MCF 10A (cell line): ENCODE measurements at regions of chr21 and their contacts with region 1.

Region 1: GRCh38 chr21:41133896-41134522 is 34.0 kb upstream of the BACE2 start:
- DNase-seq: peak; percentile 56
- H3K4me3 Mint-ChIP-seq: no peak overlapping the region
- H3K27ac Mint-ChIP-seq: no peak overlapping the region
- H3K4me1 Mint-ChIP-seq: no peaks in the 10 kb centered on the region
- H3K27me3 Mint-ChIP-seq: peaks cover 13% of the 10 kb centered on the region
- CTCF ChIP-seq: peak; percentile 63

Region 2: DNA sequence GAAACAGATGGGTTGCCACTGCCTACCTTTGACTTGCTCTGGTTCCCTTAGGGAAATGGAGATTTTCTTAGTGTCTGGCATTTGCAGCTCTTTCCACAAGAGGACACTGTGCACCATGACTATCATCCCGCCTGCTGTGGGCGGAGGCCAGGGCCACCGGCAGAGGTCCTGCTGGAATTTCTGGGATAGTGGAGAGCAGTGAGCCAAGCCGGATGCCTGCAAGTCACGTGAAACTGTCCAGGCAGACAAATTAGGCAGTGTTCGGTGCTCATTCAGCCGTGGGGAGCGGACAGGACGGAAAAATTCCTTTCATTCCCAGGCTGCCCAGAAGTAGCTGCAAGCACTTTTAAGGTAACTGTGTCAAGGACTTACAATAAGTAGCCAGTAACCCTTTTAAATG is 1345.6 kb before region 1 on chr21:
- CTCF ChIA-PET with region 1: no interaction called
- POLR2A ChIA-PET with region 1: no interaction called
- intact Hi-C with region 1: loop called (anchors 10 kb)
- DNase-seq: peak; percentile 40
- H3K4me3 Mint-ChIP-seq: peak overlapping the region; percentile 41
- H3K27ac Mint-ChIP-seq: no peak overlapping the region
- H3K4me1 Mint-ChIP-seq: no peaks in the 10 kb centered on the region
- H3K27me3 Mint-ChIP-seq: no peaks in the 10 kb centered on the region
- CTCF ChIP-seq: peak; percentile 81

Region 3: DNA sequence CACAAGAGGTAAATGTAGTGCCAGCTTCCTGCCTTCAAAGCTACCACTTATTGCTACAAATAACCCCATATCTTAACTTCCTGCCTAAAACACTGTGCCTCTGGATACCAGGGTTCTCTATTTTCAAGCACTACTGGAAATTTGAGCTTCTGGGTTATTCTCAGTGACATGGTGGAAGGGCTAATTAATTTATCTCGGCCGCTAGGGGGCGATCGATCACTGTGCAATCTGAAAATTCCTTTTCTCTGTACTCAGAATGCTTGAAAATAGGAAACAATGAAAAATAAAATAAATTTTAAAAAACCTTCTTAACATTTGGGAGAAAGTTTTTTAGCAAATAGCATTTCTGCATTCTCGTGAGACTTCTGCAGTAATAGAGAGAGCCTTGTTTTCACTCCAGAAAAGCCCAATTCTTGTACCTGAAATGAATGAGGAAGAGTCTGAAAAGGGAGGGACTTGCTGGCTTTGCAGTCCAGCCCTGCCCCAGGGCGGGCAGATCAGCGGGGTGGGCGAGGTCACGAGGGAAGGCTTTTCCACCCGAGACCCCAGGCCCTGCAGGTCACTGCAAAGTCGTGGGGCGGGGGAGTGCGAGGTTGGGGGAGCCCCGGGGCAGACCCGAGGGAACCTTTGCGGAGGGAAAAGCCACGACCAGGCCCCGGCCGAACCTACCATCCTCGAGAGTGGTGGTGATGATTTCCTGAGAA is 990.0 kb before region 1 on chr21:
- CTCF ChIA-PET with region 1: interaction called, 15 read pairs
- POLR2A ChIA-PET with region 1: no interaction called
- intact Hi-C with region 1: loop called (anchors 2 kb)
- DNase-seq: peak; percentile 40
- H3K4me3 Mint-ChIP-seq: no peak overlapping the region
- H3K27ac Mint-ChIP-seq: no peak overlapping the region
- H3K4me1 Mint-ChIP-seq: no peaks in the 10 kb centered on the region
- H3K27me3 Mint-ChIP-seq: no peaks in the 10 kb centered on the region
- CTCF ChIP-seq: peak; percentile 60

Region 4: DNA sequence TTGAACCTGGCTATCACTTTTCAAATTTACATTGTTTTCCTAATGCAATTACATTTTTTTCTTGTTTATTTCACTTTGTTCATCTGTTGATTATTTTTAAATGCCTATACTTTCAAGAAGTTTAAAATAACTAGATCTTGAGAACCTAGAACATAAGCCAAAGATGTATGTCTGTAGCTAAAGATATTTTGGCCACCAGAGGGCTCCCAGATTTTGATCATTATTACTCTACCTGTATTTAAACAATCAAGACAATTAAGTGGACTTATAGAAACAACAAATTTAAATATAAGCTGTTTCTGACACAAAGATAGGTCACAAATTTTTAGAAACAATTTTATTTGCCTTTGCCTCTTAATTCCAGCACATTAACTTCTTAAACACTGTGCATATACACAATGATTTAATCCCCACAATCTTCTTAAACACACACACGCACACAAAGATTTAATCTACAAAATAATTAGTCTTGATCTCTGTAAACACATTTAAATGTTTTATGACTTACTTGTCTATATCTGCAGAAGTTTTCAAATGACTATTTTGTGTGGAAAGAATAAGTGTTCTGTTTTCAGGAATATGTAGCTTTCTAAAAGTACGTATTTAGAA is 667.0 kb before region 1 on chr21:
- CTCF ChIA-PET with region 1: interaction called, 34 read pairs
- POLR2A ChIA-PET with region 1: no interaction called
- intact Hi-C with region 1: no loop called
- DNase-seq: peak; percentile 17
- H3K4me3 Mint-ChIP-seq: no peak overlapping the region
- H3K27ac Mint-ChIP-seq: no peak overlapping the region
- H3K4me1 Mint-ChIP-seq: no peaks in the 10 kb centered on the region
- H3K27me3 Mint-ChIP-seq: no peaks in the 10 kb centered on the region
- CTCF ChIP-seq: peak; percentile 27

Region 5: GRCh38 chr21:41121785-41122421 is 12.1 kb before region 1 on chr21:
- CTCF ChIA-PET with region 1: interaction called, 124 read pairs
- POLR2A ChIA-PET with region 1: interaction called, 3 read pairs
- intact Hi-C with region 1: no loop called
- DNase-seq: peak; percentile 77
- H3K4me3 Mint-ChIP-seq: no peak overlapping the region
- H3K27ac Mint-ChIP-seq: no peak overlapping the region
- H3K4me1 Mint-ChIP-seq: no peaks in the 10 kb centered on the region
- H3K27me3 Mint-ChIP-seq: peaks cover 28% of the 10 kb centered on the region
- CTCF ChIP-seq: peak; percentile 88